HepG2 (cell line): ENCODE measurements at regions of chr3 and their contacts with region 1.

Region 1: GRCh38 chr3:49007068-49007770 is at the start of gene WDR6:
- DNase-seq: peak; percentile 95
- ATAC-seq: peak; percentile 93
- H3K4me3 ChIP-seq: peak within 1 kb of the TSS; percentile 74 to 88 (median 78)
- H3K27ac ChIP-seq: peak within 1 kb of the TSS; percentile 86
- H3K4me1 ChIP-seq: peaks cover 58% of the 10 kb centered on the region
- H3K27me3 ChIP-seq: no peaks in the 10 kb centered on the region
- CTCF ChIP-seq: peak; percentile 76
- EP300 ChIP-seq: no peak
- POLR2A ChIP-seq: peak in 1 of 2 experiments; percentile 90; a peak in 2 of 4 replicates
- RAD21 ChIP-seq: no peak; the same call in 1 of the 2 replicates
- total RNA-seq, gene WDR6: 71.2 and 73.4 TPM in 2 replicates

Region 2: DNA sequence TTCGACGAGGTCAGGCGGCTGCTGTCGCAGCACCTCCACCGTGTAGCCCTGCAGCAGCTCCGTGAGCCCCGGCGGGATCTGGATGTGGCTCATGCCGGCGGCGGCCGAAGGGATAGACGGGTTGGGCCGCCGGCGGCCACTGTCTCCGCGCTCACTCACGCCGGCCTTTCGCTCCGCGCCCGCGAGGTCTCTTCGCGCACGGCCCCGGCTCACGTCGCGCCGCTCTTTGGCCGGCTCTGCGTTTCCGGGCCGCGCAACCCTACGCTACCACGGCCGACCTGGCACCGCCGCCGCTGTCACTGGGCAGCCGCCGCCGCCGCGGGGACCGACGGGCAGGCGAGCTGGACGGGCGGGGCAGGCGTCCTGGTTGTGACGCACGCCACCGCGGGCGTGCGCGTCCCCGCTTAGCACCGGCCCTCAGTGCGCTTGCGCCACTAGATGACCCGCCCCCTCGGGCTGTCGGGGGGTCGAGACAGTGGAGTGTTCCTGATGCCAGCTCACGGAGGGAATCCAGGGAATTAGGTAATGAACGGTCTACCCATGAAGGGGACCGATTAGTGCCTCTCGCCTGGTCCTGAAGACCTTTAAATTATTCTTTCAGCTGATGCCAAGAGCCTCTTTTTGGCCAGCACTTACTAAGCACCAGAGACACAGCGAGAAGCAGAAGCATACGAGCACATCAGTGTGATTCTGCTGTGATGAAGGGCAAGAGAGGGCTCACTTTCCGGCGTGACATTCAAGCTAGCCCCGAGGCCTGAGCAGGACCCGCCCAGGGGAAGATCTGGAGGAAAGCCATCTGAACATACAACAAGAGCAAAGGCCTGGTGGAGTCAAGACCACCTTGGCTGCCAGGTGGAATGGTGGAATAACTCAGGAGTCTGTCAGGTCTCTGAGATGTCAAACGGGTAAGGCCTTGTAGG is 159.5 kb before region 1 on chr3 and contains the start of gene PRKAR2A:
- CTCF ChIA-PET with region 1: no interaction called
- POLR2A ChIA-PET with region 1: interaction called, 12 read pairs
- in situ Hi-C with region 1: no loop called
- intact Hi-C with region 1: no loop called
- DNase-seq: peak; percentile 73
- ATAC-seq: peak; percentile 92
- H3K4me3 ChIP-seq: peak within 1 kb of the TSS; percentile 67 to 89 (median 78)
- H3K27ac ChIP-seq: peak within 1 kb of the TSS; percentile 88
- H3K4me1 ChIP-seq: peaks cover 26% of the 10 kb centered on the region
- H3K27me3 ChIP-seq: no peaks in the 10 kb centered on the region
- CTCF ChIP-seq: no peak; the same call in 1 of the 2 replicates
- EP300 ChIP-seq: no peak
- POLR2A ChIP-seq: peak; percentile 58 to 89; a peak in 3 of 4 replicates
- RAD21 ChIP-seq: peak; percentile 31
- total RNA-seq, gene PRKAR2A: 29.2 and 38.5 TPM in 2 replicates

Region 3: DNA sequence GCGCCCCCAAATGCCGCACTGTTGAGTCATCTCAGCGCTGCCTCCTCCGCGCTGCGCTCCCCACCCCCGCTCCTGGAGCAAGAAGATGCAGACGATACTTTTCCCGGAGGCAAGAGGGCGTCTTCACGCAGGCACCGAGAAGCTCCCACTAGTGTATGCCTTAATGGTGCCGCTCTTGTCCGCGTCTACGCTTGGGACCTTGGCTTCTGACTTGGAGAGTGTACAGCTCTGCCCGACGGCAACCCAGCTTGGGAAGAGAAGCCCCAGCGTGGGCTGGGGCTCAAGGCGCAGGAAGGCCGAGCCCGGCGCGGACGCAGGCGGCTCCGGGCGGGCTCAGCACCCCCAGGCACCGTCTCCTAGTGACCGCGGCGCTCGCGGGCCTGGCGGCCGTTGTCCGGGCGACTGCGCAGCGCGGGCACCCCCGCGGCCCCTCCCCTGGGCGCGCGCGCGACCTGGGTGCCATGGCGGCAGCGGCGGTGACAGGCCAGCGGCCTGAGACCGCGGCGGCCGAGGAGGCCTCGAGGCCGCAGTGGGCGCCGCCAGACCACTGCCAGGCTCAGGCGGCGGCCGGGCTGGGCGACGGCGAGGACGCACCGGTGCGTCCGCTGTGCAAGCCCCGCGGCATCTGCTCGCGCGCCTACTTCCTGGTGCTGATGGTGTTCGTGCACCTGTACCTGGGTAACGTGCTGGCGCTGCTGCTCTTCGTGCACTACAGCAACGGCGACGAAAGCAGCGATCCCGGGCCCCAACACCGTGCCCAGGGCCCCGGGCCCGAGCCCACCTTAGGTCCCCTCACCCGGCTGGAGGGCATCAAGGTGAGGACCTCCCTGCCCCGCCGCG is 17.2 kb before region 1 on chr3 and contains the start of gene P4HTM:
- CTCF ChIA-PET with region 1: interaction called, 3 read pairs
- POLR2A ChIA-PET with region 1: interaction called, 11 read pairs
- in situ Hi-C with region 1: no loop called
- intact Hi-C with region 1: no loop called
- DNase-seq: no peak
- ATAC-seq: no peak
- H3K4me3 ChIP-seq: no peak within 1 kb of the TSS
- H3K27ac ChIP-seq: no peak within 1 kb of the TSS
- H3K4me1 ChIP-seq: no peaks in the 10 kb centered on the region
- H3K27me3 ChIP-seq: no peaks in the 10 kb centered on the region
- CTCF ChIP-seq: no peak
- EP300 ChIP-seq: no peak
- POLR2A ChIP-seq: no peak
- RAD21 ChIP-seq: no peak
- total RNA-seq, gene P4HTM: not detected in 2 replicates

Region 4: GRCh38 chr3:49021813-49022687 is 14.8 kb after region 1 on chr3 and contains the start of gene NDUFAF3:
- CTCF ChIA-PET with region 1: no interaction called
- POLR2A ChIA-PET with region 1: interaction called, 280 read pairs
- in situ Hi-C with region 1: no loop called
- intact Hi-C with region 1: no loop called
- DNase-seq: peak; percentile 85
- ATAC-seq: peak; percentile 72
- H3K4me3 ChIP-seq: peak within 1 kb of the TSS; percentile 80 to 96 (median 89)
- H3K27ac ChIP-seq: peak within 1 kb of the TSS; percentile 99
- H3K4me1 ChIP-seq: peaks cover 50% of the 10 kb centered on the region
- H3K27me3 ChIP-seq: no peaks in the 10 kb centered on the region; a peak in 1 of 5 replicates
- CTCF ChIP-seq: peak; percentile 97
- EP300 ChIP-seq: peak in 1 of 2 experiments; percentile 8; a peak in 1 of 4 replicates
- POLR2A ChIP-seq: peak in 1 of 2 experiments; percentile 95; a peak in 2 of 4 replicates
- RAD21 ChIP-seq: peak; percentile 57
- total RNA-seq, gene NDUFAF3: 50.0 and 51.9 TPM in 2 replicates

Region 5: GRCh38 chr3:49028673-49029562 is 21.7 kb after region 1 on chr3 and contains the start of gene IMPDH2:
- CTCF ChIA-PET with region 1: no interaction called
- POLR2A ChIA-PET with region 1: interaction called, 280 read pairs
- in situ Hi-C with region 1: no loop called
- intact Hi-C with region 1: no loop called
- DNase-seq: peak; percentile 82
- ATAC-seq: peak; percentile 86
- H3K4me3 ChIP-seq: peak within 1 kb of the TSS; percentile 56 to 78 (median 73)
- H3K27ac ChIP-seq: peak within 1 kb of the TSS; percentile 63
- H3K4me1 ChIP-seq: peaks cover 43% of the 10 kb centered on the region
- H3K27me3 ChIP-seq: no peaks in the 10 kb centered on the region
- CTCF ChIP-seq: peak; percentile 71
- EP300 ChIP-seq: peak in 1 of 2 experiments; percentile 42; a peak in 1 of 4 replicates
- POLR2A ChIP-seq: peak in 1 of 2 experiments; percentile 99; a peak in 2 of 4 replicates
- RAD21 ChIP-seq: peak; percentile 72
- total RNA-seq, gene IMPDH2: 260 and 344 TPM in 2 replicates

Region 6: GRCh38 chr3:49120438-49121131 is 113.4 kb after region 1 on chr3 and contains the start of gene USP19:
- CTCF ChIA-PET with region 1: no interaction called
- POLR2A ChIA-PET with region 1: interaction called, 15 read pairs
- in situ Hi-C with region 1: no loop called
- intact Hi-C with region 1: no loop called
- DNase-seq: peak; percentile 89
- ATAC-seq: peak; percentile 93
- H3K4me3 ChIP-seq: peak within 1 kb of the TSS; percentile 76 to 100 (median 95)
- H3K27ac ChIP-seq: peak within 1 kb of the TSS; percentile 84
- H3K4me1 ChIP-seq: peaks cover 19% of the 10 kb centered on the region
- H3K27me3 ChIP-seq: no peaks in the 10 kb centered on the region; a peak in 1 of 5 replicates
- CTCF ChIP-seq: peak; percentile 12; the same call in 1 of the 2 replicates
- EP300 ChIP-seq: 0 out of 4 replicates have a peak, but pooled peaks of 1 of the 2 experiments have one; percentile 11
- POLR2A ChIP-seq: peak in 1 of 2 experiments; percentile 88; a peak in 2 of 4 replicates
- RAD21 ChIP-seq: peak; percentile 68
- total RNA-seq, gene USP19: 31.7 and 33.8 TPM in 2 replicates

Region 7: DNA sequence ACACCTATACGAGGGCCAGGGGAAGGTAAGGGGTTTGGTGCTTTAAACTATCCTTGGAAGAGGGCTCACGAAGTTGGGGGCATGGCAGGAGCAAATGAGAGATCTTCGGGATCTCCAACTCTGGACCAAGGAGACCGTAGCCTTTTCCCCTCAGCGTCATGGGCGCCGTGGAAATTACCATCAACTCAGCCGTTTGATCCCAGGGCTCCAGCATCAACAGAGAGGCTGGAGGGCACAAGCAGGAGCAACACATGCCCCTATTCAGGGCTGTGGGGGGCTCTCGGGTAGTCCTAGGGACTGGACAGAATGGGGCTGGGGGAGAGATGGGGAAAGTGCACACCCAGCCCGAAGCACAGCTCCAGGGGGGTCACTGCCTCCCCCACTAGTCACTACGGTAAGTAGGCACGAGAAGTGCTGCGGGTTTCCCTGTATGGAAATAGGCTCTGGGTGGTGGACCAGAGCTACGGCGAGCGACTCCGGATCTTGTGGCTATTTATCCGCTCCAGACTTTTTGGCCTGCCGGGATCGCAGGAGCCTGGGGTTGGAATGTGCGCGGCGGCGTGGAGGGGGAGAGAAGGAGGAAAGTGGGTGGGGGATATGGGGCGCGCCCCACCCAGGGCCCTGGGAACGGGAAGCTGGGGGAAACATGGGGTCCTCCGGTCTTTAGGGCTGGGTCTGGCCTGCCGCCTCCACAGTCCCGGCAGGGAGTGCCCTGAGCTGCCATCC is 126.2 kb after region 1 on chr3:
- CTCF ChIA-PET with region 1: no interaction called
- POLR2A ChIA-PET with region 1: interaction called, 20 read pairs
- in situ Hi-C with region 1: no loop called
- intact Hi-C with region 1: no loop called
- DNase-seq: peak; percentile 80
- ATAC-seq: peak; percentile 60
- H3K4me3 ChIP-seq: peak overlapping the region; percentile 72 to 78 (median 77)
- H3K27ac ChIP-seq: peak overlapping the region; percentile 80
- H3K4me1 ChIP-seq: peaks cover 39% of the 10 kb centered on the region
- H3K27me3 ChIP-seq: no peaks in the 10 kb centered on the region
- CTCF ChIP-seq: peak; percentile 35
- EP300 ChIP-seq: no peak
- POLR2A ChIP-seq: peak in 1 of 2 experiments; percentile 31; a peak in 1 of 4 replicates
- RAD21 ChIP-seq: 0 out of 2 replicates have a peak, but pooled peaks have one; percentile 18